ENCODE measurements at regions of chr1 and their contacts with region 1.

Region 1: GRCh38 chr1:200971955-200972711 is 51.4 kb downstream of the KIF21B start:
- DNase-seq: peak; percentile 83
- ATAC-seq: peak; percentile 57
- H3K4me3 Mint-ChIP-seq: no peak overlapping the region
- H3K27ac Mint-ChIP-seq: no peak overlapping the region
- H3K4me1 Mint-ChIP-seq: no peaks in the 10 kb centered on the region; the same call in 1 of the 2 replicates
- H3K27me3 Mint-ChIP-seq: no peaks in the 10 kb centered on the region
- CTCF ChIP-seq: peak; percentile 100

Region 2: GRCh38 chr1:200620273-200621131 is 351.6 kb before region 1 on chr1 and contains the start of gene KIF14:
- CTCF ChIA-PET with region 1: interaction called, 12 read pairs
- POLR2A ChIA-PET with region 1: no interaction called
- DNase-seq: peak; percentile 95
- ATAC-seq: peak; percentile 99
- H3K4me3 Mint-ChIP-seq: peak within 1 kb of the TSS; percentile 96
- H3K27ac Mint-ChIP-seq: peak within 1 kb of the TSS; percentile 87
- H3K4me1 Mint-ChIP-seq: peaks cover 24% of the 10 kb centered on the region
- H3K27me3 Mint-ChIP-seq: no peaks in the 10 kb centered on the region
- CTCF ChIP-seq: no peak
- total RNA-seq, gene KIF14: 20.0 to 24.4 TPM (median 20.7 TPM) in 3 replicates

Region 3: GRCh38 chr1:200945111-200945510 is 27.0 kb before region 1 on chr1:
- CTCF ChIA-PET with region 1: interaction called, 10 read pairs
- POLR2A ChIA-PET with region 1: no interaction called
- DNase-seq: no peak
- ATAC-seq: no peak
- H3K4me3 Mint-ChIP-seq: no peak overlapping the region
- H3K27ac Mint-ChIP-seq: no peak overlapping the region
- H3K4me1 Mint-ChIP-seq: no peaks in the 10 kb centered on the region
- H3K27me3 Mint-ChIP-seq: no peaks in the 10 kb centered on the region
- CTCF ChIP-seq: no peak

Region 4: GRCh38 chr1:201009962-201010645 is 38.0 kb after region 1 on chr1:
- CTCF ChIA-PET with region 1: interaction called, 218 read pairs
- POLR2A ChIA-PET with region 1: no interaction called
- DNase-seq: peak; percentile 49
- ATAC-seq: peak; percentile 36
- H3K4me3 Mint-ChIP-seq: no peak overlapping the region
- H3K27ac Mint-ChIP-seq: no peak overlapping the region
- H3K4me1 Mint-ChIP-seq: peaks cover 16% of the 10 kb centered on the region
- H3K27me3 Mint-ChIP-seq: no peaks in the 10 kb centered on the region
- CTCF ChIP-seq: no peak

Region 5: GRCh38 chr1:201053158-201053860 is 81.2 kb after region 1 on chr1:
- CTCF ChIA-PET with region 1: interaction called, 20 read pairs
- POLR2A ChIA-PET with region 1: no interaction called
- DNase-seq: peak; percentile 45
- ATAC-seq: peak; percentile 75
- H3K4me3 Mint-ChIP-seq: no peak overlapping the region
- H3K27ac Mint-ChIP-seq: no peak overlapping the region
- H3K4me1 Mint-ChIP-seq: peaks cover 9% of the 10 kb centered on the region
- H3K27me3 Mint-ChIP-seq: no peaks in the 10 kb centered on the region
- CTCF ChIP-seq: no peak

Region 6: GRCh38 chr1:201114236-201115131 is 142.4 kb after region 1 on chr1:
- CTCF ChIA-PET with region 1: interaction called, 76 read pairs
- POLR2A ChIA-PET with region 1: no interaction called
- DNase-seq: peak; percentile 95
- ATAC-seq: peak; percentile 92
- H3K4me3 Mint-ChIP-seq: peak overlapping the region; percentile 73
- H3K27ac Mint-ChIP-seq: no peak overlapping the region
- H3K4me1 Mint-ChIP-seq: peaks cover 8% of the 10 kb centered on the region
- H3K27me3 Mint-ChIP-seq: peaks cover 62% of the 10 kb centered on the region
- CTCF ChIP-seq: peak; percentile 65